Activated naive CD4-positive, alpha-beta T cell treated with anti-CD3 and anti-CD28 coated beads for 36 hours (primary cell): ENCODE measurements at regions of chr19 and their contacts with region 1.

Region 1: GRCh38 chr19:54390942-54391577 is 24.2 kb upstream of the TTYH1 start:
- DNase-seq: peak; percentile 77
- H3K4me3 Mint-ChIP-seq: no peak overlapping the region
- H3K27ac Mint-ChIP-seq: no peak overlapping the region
- H3K4me1 Mint-ChIP-seq: peaks cover 27% of the 10 kb centered on the region
- H3K27me3 Mint-ChIP-seq: no peaks in the 10 kb centered on the region

Region 2: GRCh38 chr19:54297760-54298305 is 93.2 kb before region 1 on chr19:
- CTCF ChIA-PET with region 1: no interaction called
- intact Hi-C with region 1: no loop called
- DNase-seq: no peak
- H3K4me3 Mint-ChIP-seq: no peak overlapping the region
- H3K27ac Mint-ChIP-seq: no peak overlapping the region
- H3K4me1 Mint-ChIP-seq: no peaks in the 10 kb centered on the region
- H3K27me3 Mint-ChIP-seq: peaks cover 15% of the 10 kb centered on the region

Region 3: GRCh38 chr19:54319892-54320670 is 71.0 kb before region 1 on chr19:
- CTCF ChIA-PET with region 1: interaction called, 105 read pairs
- intact Hi-C with region 1: loop called (anchors 1 kb)
- DNase-seq: no peak
- H3K4me3 Mint-ChIP-seq: no peak overlapping the region
- H3K27ac Mint-ChIP-seq: no peak overlapping the region
- H3K4me1 Mint-ChIP-seq: no peaks in the 10 kb centered on the region
- H3K27me3 Mint-ChIP-seq: peaks cover 7% of the 10 kb centered on the region

Region 4: GRCh38 chr19:54325194-54325621 is 65.9 kb before region 1 on chr19:
- CTCF ChIA-PET with region 1: interaction called, 105 read pairs
- intact Hi-C with region 1: loop called (anchors 1 kb)
- DNase-seq: peak; percentile 71
- H3K4me3 Mint-ChIP-seq: no peak overlapping the region
- H3K27ac Mint-ChIP-seq: no peak overlapping the region
- H3K4me1 Mint-ChIP-seq: peaks cover 29% of the 10 kb centered on the region
- H3K27me3 Mint-ChIP-seq: peaks cover 4% of the 10 kb centered on the region

Region 5: GRCh38 chr19:54352546-54352945 is 38.5 kb before region 1 on chr19:
- CTCF ChIA-PET with region 1: interaction called, 27 read pairs
- intact Hi-C with region 1: no loop called
- DNase-seq: no peak
- H3K4me3 Mint-ChIP-seq: no peak overlapping the region
- H3K27ac Mint-ChIP-seq: no peak overlapping the region
- H3K4me1 Mint-ChIP-seq: peaks cover 3% of the 10 kb centered on the region
- H3K27me3 Mint-ChIP-seq: no peaks in the 10 kb centered on the region

Region 6: GRCh38 chr19:54364775-54365257 is 26.2 kb before region 1 on chr19 and contains the start of gene LAIR1:
- CTCF ChIA-PET with region 1: interaction called, 17 read pairs
- intact Hi-C with region 1: loop called (anchors 2 kb)
- DNase-seq: peak; percentile 79
- H3K4me3 Mint-ChIP-seq: peak within 1 kb of the TSS; percentile 89
- H3K27ac Mint-ChIP-seq: peak within 1 kb of the TSS; percentile 91
- H3K4me1 Mint-ChIP-seq: peaks cover 67% of the 10 kb centered on the region
- H3K27me3 Mint-ChIP-seq: peaks cover 8% of the 10 kb centered on the region
- total RNA-seq, gene LAIR1: 5.2 to 5.7 TPM

Region 7: GRCh38 chr19:54373781-54374631 is 17.1 kb before region 1 on chr19:
- CTCF ChIA-PET with region 1: interaction called, 17 read pairs
- intact Hi-C with region 1: loop called (anchors 1 kb)
- DNase-seq: no peak
- H3K4me3 Mint-ChIP-seq: no peak overlapping the region
- H3K27ac Mint-ChIP-seq: no peak overlapping the region
- H3K4me1 Mint-ChIP-seq: peaks cover 75% of the 10 kb centered on the region
- H3K27me3 Mint-ChIP-seq: peaks cover 33% of the 10 kb centered on the region